ENCODE measurements at regions of chr20 and their contacts with region 1.

Region 1: GRCh38 chr20:7585126-7585679 is 355.1 kb downstream of the HAO1 start:
- DNase-seq: no peak
- ATAC-seq: no peak
- H3K4me3 ChIP-seq: no peak overlapping the region
- H3K27ac ChIP-seq: no peak overlapping the region
- H3K4me1 ChIP-seq: no peaks in the 10 kb centered on the region
- H3K27me3 ChIP-seq: no peaks in the 10 kb centered on the region
- CTCF ChIP-seq: no peak
- POLR2A ChIP-seq: no peak

Region 2: GRCh38 chr20:7497985-7498384 is 87.2 kb before region 1 on chr20:
- in situ Hi-C with region 1: loop called in 1 of 4 experiments (anchors 25 kb)
- intact Hi-C with region 1: no loop called
- DNase-seq: no peak
- ATAC-seq: no peak
- H3K4me3 ChIP-seq: no peak overlapping the region
- H3K27ac ChIP-seq: no peak overlapping the region
- H3K4me1 ChIP-seq: no peaks in the 10 kb centered on the region
- H3K27me3 ChIP-seq: no peaks in the 10 kb centered on the region
- CTCF ChIP-seq: no peak
- POLR2A ChIP-seq: no peak

Region 3: DNA sequence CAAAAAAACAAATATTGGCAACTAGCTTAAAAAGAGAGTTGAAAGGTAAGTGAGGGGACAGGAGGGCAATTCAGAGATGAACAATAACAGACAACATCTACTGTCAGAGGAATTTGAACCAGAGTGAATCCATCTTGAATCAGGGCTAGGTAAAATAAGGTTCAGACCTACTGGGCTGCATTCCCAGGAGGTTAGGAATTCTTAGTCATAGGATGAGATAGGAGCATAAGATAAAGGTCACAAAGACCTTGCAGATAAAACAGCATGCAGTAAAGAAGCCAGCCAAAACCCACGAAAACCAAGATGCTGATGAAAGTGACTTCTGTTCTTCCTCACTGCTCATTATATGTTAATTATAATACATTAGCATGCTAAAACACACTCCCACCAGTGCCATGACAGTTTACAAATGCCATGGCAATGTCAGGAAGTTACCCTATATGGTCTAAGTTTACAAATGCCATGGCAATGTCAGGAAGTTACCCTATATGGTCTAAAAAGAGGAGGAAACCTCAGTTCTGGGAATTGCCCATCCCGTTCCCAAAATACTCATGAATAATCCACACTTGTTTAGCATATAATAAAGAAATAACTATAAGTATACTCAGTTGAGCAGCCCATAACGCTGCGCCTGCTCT is 106.5 kb after region 1 on chr20:
- in situ Hi-C with region 1: no loop called
- intact Hi-C with region 1: no loop called
- DNase-seq: no peak
- ATAC-seq: no peak
- H3K4me3 ChIP-seq: no peak overlapping the region
- H3K27ac ChIP-seq: no peak overlapping the region
- H3K4me1 ChIP-seq: no peaks in the 10 kb centered on the region
- H3K27me3 ChIP-seq: no peaks in the 10 kb centered on the region
- CTCF ChIP-seq: no peak
- POLR2A ChIP-seq: no peak

Region 4: DNA sequence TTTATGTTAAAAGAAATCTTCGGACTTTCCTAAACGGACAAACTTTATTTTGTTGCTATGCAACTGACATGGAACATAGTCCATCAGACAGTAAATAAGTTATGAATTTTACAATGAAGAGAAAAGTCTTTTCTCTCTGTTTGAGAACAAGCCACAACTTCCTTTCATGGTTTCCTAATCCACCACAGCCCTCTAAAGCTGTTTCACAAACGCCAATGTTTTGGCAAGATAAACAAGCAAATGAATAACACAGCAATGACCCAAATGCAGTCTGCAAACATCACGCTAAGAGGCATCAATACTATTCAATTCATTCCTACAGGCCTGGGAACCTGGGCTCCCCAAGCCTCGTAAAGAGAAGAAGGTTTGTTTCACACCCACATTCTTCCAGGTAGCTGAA is 294.7 kb after region 1 on chr20:
- in situ Hi-C with region 1: no loop called
- intact Hi-C with region 1: no loop called
- DNase-seq: no peak
- ATAC-seq: no peak
- H3K4me3 ChIP-seq: no peak overlapping the region
- H3K27ac ChIP-seq: no peak overlapping the region
- H3K4me1 ChIP-seq: no peaks in the 10 kb centered on the region
- H3K27me3 ChIP-seq: no peaks in the 10 kb centered on the region
- CTCF ChIP-seq: no peak
- POLR2A ChIP-seq: no peak